ENCODE measurements at regions of chr11 and their contacts with region 1.

Region 1: GRCh38 chr11:64742889-64743590 is 902 bp downstream of the RASGRP2 start:
- DNase-seq: peak; percentile 73
- ATAC-seq: peak; percentile 38
- H3K4me3 Mint-ChIP-seq: peak overlapping the region; percentile 31
- H3K27ac Mint-ChIP-seq: no peak overlapping the region
- H3K4me1 Mint-ChIP-seq: peaks cover 20% of the 10 kb centered on the region
- H3K27me3 Mint-ChIP-seq: no peaks in the 10 kb centered on the region
- CTCF ChIP-seq: peak; percentile 91

Region 2: GRCh38 chr11:64593156-64594105 is 149.6 kb before region 1 on chr11:
- CTCF ChIA-PET with region 1: no interaction called
- POLR2A ChIA-PET with region 1: no interaction called
- intact Hi-C with region 1: no loop called
- DNase-seq: no peak
- ATAC-seq: no peak
- H3K4me3 Mint-ChIP-seq: no peak overlapping the region
- H3K27ac Mint-ChIP-seq: no peak overlapping the region
- H3K4me1 Mint-ChIP-seq: no peaks in the 10 kb centered on the region
- H3K27me3 Mint-ChIP-seq: peaks cover 2% of the 10 kb centered on the region
- CTCF ChIP-seq: no peak

Region 3: DNA sequence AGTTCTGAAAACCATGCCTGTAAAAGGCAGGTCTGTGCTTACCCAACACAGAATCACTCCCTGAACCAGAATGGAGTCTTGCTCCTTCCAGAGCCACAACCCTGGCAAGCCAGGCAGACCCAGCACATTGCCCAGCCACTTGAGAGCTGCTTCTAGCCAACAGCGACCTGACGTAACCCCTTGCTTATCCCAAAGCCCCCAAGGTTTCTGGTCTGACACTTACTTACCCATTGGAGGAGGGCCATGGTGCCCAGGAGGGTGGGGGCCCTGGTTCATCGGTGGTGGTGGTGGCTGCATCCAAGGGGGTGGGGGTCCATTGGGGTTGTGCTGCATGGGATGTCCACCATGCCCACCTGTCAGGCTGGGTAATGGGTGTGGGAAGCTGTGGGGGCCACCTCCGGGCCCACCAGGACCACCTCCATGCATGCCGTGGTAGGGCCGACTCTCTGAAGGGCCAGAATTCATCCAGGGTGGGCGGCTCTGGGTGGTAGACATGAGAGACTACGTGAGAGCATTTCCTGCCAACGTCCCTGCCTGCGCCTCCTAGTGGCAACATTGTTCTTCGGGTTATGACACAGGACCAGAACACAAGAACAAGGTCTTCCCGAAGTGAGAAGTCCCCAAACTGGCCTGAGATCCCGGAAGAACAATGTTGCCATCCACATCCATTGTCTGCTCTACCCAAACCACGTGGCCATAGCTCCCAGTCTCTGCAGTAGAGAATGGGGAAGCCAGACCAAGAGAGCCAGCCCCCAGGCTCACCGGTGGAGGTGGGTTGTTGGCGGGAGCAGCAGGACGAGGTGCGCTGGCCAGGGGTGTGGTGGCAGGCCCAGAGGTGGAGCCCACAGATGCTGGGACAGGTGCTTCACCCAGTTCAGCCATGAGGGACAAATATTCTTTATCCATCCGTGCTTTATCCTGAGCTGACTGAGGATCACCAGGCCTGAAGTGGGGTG is 24.6 kb after region 1 on chr11:
- CTCF ChIA-PET with region 1: interaction called, 45 read pairs
- POLR2A ChIA-PET with region 1: interaction called, 331 read pairs
- intact Hi-C with region 1: no loop called
- DNase-seq: peak; percentile 95
- ATAC-seq: peak; percentile 48
- H3K4me3 Mint-ChIP-seq: no peak overlapping the region
- H3K27ac Mint-ChIP-seq: peak overlapping the region; percentile 86
- H3K4me1 Mint-ChIP-seq: peaks cover 91% of the 10 kb centered on the region
- H3K27me3 Mint-ChIP-seq: no peaks in the 10 kb centered on the region
- CTCF ChIP-seq: peak; percentile 94

Region 4: GRCh38 chr11:64778508-64779346 is 35.7 kb after region 1 on chr11 and contains the start of gene SF1:
- CTCF ChIA-PET with region 1: interaction called, 19 read pairs
- POLR2A ChIA-PET with region 1: interaction called, 331 read pairs
- intact Hi-C with region 1: no loop called
- DNase-seq: peak; percentile 100
- ATAC-seq: peak; percentile 90
- H3K4me3 Mint-ChIP-seq: peak within 1 kb of the TSS; percentile 95
- H3K27ac Mint-ChIP-seq: peak within 1 kb of the TSS; percentile 96
- H3K4me1 Mint-ChIP-seq: peaks cover 46% of the 10 kb centered on the region
- H3K27me3 Mint-ChIP-seq: no peaks in the 10 kb centered on the region
- CTCF ChIP-seq: no peak
- total RNA-seq, gene SF1: 325 to 342 TPM

Measured in activated CD8-positive, alpha-beta T cell treated with anti-CD3 and anti-CD28 coated beads for 36 hours (primary cell).